ENCODE measurements at regions of chr6 and their contacts with region 1.

Region 1: DNA sequence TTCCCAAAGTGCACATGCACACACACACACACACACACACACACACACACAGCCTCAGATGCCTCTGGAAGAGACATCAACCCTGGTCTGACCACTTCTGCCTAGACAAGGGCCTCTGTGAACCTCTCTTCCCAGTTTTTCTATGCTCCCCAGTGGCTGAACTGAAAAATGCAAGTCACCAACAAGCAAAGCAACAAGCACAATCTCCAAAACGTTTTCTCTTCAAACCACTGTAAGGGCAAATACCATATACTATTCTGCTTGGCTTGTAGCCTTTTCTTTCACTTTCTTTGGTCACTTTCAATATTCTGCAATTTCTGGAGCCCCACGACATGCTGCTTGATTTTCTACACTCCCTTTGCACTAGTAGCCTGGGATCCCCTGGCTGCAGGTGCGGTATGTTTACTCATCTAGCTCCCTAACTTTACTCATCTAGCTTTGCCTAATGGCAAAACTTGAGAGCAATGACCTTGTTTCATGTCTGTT is 121.4 kb upstream of the DST start:
- DNase-seq: no peak
- ATAC-seq: peak; percentile 58 to 68

Region 2: DNA sequence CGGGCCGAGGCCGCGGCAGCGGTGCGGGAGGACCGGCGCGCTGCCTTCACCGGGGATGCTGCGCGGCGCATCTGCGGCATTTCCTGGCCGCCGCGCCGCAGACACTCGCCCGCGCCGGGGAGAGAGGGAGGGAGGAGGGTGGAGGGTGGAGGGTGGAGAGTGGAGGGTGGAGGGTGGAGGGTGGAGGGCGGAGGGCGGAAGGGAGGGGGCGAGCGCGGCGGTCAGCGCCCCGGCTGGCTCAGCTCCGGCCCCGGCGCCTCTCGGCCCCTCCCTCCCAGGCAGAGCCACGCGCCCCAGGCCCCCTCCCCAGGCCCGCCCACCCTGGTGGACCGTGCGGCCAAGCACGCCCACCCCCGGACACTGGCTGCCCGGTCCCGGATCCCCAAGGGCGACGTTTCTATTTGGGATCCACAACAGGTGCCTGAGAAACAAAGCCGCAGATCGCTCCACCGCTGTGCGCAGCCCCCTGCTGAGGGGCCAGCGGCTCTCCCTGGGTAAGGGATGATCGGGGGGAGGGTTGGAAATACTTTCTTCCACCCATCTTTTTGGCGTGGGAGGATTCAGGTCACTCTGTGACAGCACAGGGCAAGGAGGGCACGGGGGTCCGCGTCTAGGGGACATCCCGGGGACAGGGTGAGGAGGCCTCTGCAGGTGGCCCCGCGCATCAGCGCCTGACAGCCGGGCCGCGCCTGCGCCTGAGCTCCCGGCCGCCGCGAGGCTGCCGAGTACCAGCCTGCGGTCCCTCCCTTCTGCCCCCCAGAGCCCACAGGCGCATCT is 79.6 kb after region 1 on chr6:
- intact Hi-C with region 1: loop called (anchors 2 kb)
- DNase-seq: peak; percentile 77
- ATAC-seq: peak; percentile 94 to 95

Measured in left cardiac atrium (tissue), 4 donors.